ENCODE measurements at regions of chr16 and their contacts with region 1.

Region 1: GRCh38 chr16:2155091-2156021 is at the start of gene TRAF7:
- DNase-seq: peak; percentile 99
- H3K4me3 Mint-ChIP-seq: peak within 1 kb of the TSS; percentile 92
- H3K27ac Mint-ChIP-seq: peak within 1 kb of the TSS; percentile 93
- H3K4me1 Mint-ChIP-seq: peaks cover 42% of the 10 kb centered on the region
- H3K27me3 Mint-ChIP-seq: no peaks in the 10 kb centered on the region
- total RNA-seq, gene TRAF7: 55.6 to 59.7 TPM

Region 2: GRCh38 chr16:1950047-1950446 is 205.3 kb before region 1 on chr16:
- CTCF ChIA-PET with region 1: interaction called, 4 read pairs
- POLR2A ChIA-PET with region 1: interaction called, 13 read pairs
- DNase-seq: no peak
- H3K4me3 Mint-ChIP-seq: no peak overlapping the region
- H3K27ac Mint-ChIP-seq: no peak overlapping the region
- H3K4me1 Mint-ChIP-seq: no peaks in the 10 kb centered on the region
- H3K27me3 Mint-ChIP-seq: peaks cover 2% of the 10 kb centered on the region

Region 3: DNA sequence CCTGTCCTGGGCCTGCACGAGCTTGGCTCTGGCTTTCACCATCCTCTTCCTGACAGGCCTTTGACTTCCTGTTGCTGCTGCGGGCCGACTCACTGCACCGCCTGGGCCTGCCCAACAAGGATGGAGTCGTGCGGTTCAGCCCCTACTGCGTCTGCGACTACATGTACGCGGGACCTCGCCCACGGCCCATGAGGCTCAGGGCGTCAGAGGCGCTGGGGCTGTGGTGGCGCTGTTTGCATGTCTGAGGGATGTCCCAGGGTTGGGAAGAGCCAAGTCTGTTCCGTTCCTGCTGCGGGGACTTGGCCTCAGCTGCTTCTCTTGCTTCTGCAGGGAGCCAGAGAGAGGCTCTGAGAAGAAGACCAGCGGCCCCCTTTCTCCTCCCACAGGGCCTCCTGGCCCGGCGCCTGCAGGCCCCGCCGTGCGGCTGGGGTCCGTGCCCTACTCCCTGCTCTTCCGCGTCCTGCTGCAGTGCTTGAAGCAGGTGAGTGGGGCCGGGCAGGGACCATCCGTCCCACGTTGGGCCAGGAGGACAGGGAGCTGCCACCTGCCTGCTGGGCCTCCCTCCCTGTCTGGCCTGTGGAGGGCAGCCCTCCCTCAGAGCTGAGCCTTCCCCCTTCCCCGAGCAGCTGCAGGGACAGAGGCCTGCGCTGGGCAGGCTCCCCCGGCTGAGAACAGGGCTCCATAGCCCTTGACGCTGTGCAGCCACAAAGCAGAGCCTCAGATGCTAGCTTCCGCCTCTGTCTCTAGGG is 83.7 kb before region 1 on chr16:
- CTCF ChIA-PET with region 1: no interaction called
- POLR2A ChIA-PET with region 1: no interaction called
- DNase-seq: no peak
- H3K4me3 Mint-ChIP-seq: no peak overlapping the region
- H3K27ac Mint-ChIP-seq: no peak overlapping the region
- H3K4me1 Mint-ChIP-seq: no peaks in the 10 kb centered on the region
- H3K27me3 Mint-ChIP-seq: no peaks in the 10 kb centered on the region